Breast epithelium (tissue), 4 donors: ENCODE measurements at regions of chr2 and their contacts with region 1.

Region 1: DNA sequence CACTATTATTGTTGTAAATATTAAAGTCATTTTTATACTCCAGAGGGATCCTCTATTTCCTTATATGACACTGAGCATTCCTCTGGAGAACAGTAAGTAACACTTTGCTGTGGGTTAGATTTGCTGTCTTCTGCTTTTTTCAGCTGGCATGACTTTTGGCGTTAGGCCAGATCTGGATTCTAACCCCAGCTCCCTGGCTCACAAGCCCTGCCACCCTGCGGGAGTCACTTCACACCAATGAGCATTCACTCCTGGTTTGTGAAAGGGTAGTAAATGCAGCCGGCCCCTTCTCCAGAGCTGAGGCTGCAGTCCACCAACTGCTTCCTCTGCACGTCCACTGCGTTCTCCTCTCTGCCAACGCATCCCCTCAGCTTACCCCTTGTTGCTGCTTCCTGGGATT is 373.8 kb upstream of the RAB6C start:
- DNase-seq: no peak
- H3K4me3 ChIP-seq: no peak overlapping the region
- H3K27ac ChIP-seq: no peak overlapping the region
- H3K4me1 ChIP-seq: no peaks in the 10 kb centered on the region
- H3K27me3 ChIP-seq: no peaks in the 10 kb centered on the region
- CTCF ChIP-seq: no peak
- POLR2A ChIP-seq: no peak

Region 2: DNA sequence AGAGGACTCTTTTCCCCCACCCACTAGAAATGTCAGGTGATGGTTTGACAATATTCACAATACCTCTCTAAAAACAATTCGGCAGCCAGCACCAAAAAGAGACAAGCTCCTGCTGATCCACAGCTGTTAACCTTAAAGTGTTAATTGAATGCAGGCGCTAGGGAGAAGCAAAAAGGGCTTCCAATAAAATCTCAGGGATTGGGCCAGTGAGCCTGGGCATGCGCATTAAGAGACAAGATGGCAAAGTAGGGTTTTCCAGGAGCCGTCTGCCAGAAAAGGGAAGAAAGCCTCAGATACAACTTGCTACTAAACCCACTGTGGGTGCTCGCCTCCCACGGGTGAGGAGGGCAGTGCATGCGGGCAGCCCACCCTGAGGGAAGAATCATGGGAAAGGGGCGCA is 1385.8 kb before region 1 on chr2:
- intact Hi-C with region 1: loop called (anchors 5 kb)
- DNase-seq: no peak
- H3K4me3 ChIP-seq: no peak overlapping the region
- H3K27ac ChIP-seq: no peak overlapping the region
- H3K4me1 ChIP-seq: no peaks in the 10 kb centered on the region
- H3K27me3 ChIP-seq: no peaks in the 10 kb centered on the region
- CTCF ChIP-seq: no peak
- POLR2A ChIP-seq: no peak